SK-N-SH (cell line): ENCODE measurements at regions of chr17 and their contacts with region 1.

Region 1: GRCh38 chr17:58417300-58418092 is at the start of gene RNF43:
- DNase-seq: peak; percentile 90
- H3K4me3 ChIP-seq: peak within 1 kb of the TSS; percentile 33 to 50
- H3K27ac ChIP-seq: no peak within 1 kb of the TSS
- H3K4me1 ChIP-seq: peaks cover 0 to 6% of the 10 kb centered on the region in 2 experiments; a peak in 2 of 4 replicates
- H3K27me3 ChIP-seq: peaks cover 20% of the 10 kb centered on the region
- CTCF ChIP-seq: peak; percentile 79
- EP300 ChIP-seq: no peak
- RAD21 ChIP-seq: peak; percentile 87
- polyA plus RNA-seq, gene RNF43: not detected in 2 replicates

Region 2: GRCh38 chr17:58249270-58250133 is 168.0 kb before region 1 on chr17:
- CTCF ChIA-PET with region 1: interaction called, 51 read pairs
- POLR2A ChIA-PET with region 1: no interaction called
- DNase-seq: peak; percentile 99
- H3K4me3 ChIP-seq: peak overlapping the region; percentile 47 to 71
- H3K27ac ChIP-seq: no peak overlapping the region
- H3K4me1 ChIP-seq: peaks cover 0 to 8% of the 10 kb centered on the region in 2 experiments; a peak in 1 of 4 replicates
- H3K27me3 ChIP-seq: peaks cover 79% of the 10 kb centered on the region
- CTCF ChIP-seq: peak; percentile 99
- EP300 ChIP-seq: no peak
- RAD21 ChIP-seq: peak; percentile 66

Region 3: DNA sequence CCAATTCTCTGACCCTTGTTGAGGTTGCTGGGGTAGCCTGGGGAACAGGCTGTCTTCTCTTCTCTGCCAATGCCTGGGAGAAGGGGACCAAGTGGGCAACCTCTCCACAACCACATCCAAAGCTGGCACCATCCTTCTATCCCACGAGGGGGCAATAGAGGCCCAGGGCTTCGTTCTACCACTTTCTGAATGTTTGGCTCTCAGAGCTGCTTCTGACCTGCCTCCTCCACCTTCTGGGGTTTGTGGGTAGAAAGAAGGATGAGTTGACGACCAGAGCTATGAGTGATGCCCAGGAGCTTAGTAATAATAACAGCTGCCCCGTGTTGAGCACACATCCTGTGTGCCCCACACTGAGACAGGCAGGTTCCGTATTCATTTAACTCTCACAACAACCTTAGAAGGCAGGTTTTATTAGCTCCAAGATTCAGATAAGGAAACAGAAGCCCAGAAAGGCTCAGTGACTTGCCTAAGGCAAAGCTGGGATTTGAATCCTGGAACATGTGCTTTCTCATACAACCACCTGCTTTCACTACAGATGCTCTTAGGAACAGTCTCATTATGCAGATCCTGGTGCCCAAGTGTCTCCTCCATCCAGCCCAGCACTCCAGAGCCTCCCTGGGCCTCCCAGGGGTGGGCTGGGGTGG is 100.0 kb before region 1 on chr17:
- CTCF ChIA-PET with region 1: interaction called, 31 read pairs
- POLR2A ChIA-PET with region 1: no interaction called
- DNase-seq: peak; percentile 81
- H3K4me3 ChIP-seq: no peak overlapping the region
- H3K27ac ChIP-seq: no peak overlapping the region
- H3K4me1 ChIP-seq: no peaks in the 10 kb centered on the region
- H3K27me3 ChIP-seq: no peaks in the 10 kb centered on the region
- CTCF ChIP-seq: peak; percentile 74
- EP300 ChIP-seq: no peak
- RAD21 ChIP-seq: peak; percentile 83

Region 4: DNA sequence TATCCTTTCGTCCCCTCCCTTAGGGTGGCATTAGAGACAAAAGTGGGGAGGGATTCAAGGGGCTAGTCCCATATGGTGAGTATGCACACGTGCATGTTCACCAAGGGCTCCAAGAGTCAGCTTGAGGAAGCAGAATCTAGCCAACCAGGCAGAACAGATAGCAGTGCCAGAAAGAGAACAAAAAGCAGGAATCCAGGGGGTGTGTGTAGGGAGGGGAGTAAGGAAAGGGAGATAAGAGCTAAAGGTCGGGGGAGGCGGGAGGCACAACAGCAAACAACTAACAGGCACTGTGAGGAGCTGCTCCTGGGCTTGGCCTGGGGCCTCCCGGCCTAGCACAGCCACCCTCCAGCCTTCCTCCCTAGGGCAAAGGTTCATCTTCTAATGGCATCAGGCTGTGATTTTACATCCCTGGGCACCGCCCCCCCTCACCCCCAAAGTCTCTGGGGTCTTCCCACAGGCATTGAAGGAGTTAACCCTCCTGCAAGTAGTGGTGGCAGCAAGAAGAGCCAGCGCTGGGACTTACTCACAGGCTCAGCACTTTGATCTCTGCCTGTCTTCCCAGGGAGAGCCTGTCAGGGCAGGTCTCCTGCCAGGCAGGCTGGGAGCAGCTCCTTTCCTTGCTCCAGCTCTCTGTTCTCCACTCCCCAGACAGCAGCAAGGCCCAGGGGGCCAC is 53.1 kb before region 1 on chr17:
- CTCF ChIA-PET with region 1: interaction called, 21 read pairs
- POLR2A ChIA-PET with region 1: no interaction called
- DNase-seq: no peak
- H3K4me3 ChIP-seq: no peak overlapping the region
- H3K27ac ChIP-seq: no peak overlapping the region
- H3K4me1 ChIP-seq: peaks cover 0 to 2% of the 10 kb centered on the region in 2 experiments; a peak in 1 of 4 replicates
- H3K27me3 ChIP-seq: peaks cover 32% of the 10 kb centered on the region; the same call in 1 of the 2 replicates
- CTCF ChIP-seq: no peak
- EP300 ChIP-seq: no peak
- RAD21 ChIP-seq: no peak

Region 5: GRCh38 chr17:58402047-58402446 is 15.4 kb before region 1 on chr17:
- CTCF ChIA-PET with region 1: interaction called, 12 read pairs
- POLR2A ChIA-PET with region 1: no interaction called
- DNase-seq: no peak
- H3K4me3 ChIP-seq: no peak overlapping the region
- H3K27ac ChIP-seq: no peak overlapping the region
- H3K4me1 ChIP-seq: no peaks in the 10 kb centered on the region
- H3K27me3 ChIP-seq: peaks cover 28% of the 10 kb centered on the region
- CTCF ChIP-seq: no peak
- EP300 ChIP-seq: no peak
- RAD21 ChIP-seq: no peak

Region 6: GRCh38 chr17:58447039-58447975 is 29.8 kb after region 1 on chr17:
- CTCF ChIA-PET with region 1: interaction called, 12 read pairs
- POLR2A ChIA-PET with region 1: no interaction called
- DNase-seq: peak; percentile 78
- H3K4me3 ChIP-seq: peak overlapping the region in 1 of 2 experiments; percentile 31; a peak in 1 of 4 replicates
- H3K27ac ChIP-seq: no peak overlapping the region
- H3K4me1 ChIP-seq: no peaks in the 10 kb centered on the region
- H3K27me3 ChIP-seq: no peaks in the 10 kb centered on the region; the same call in 1 of the 2 replicates
- CTCF ChIP-seq: peak; percentile 88
- EP300 ChIP-seq: no peak
- RAD21 ChIP-seq: peak; percentile 98

Region 7: DNA sequence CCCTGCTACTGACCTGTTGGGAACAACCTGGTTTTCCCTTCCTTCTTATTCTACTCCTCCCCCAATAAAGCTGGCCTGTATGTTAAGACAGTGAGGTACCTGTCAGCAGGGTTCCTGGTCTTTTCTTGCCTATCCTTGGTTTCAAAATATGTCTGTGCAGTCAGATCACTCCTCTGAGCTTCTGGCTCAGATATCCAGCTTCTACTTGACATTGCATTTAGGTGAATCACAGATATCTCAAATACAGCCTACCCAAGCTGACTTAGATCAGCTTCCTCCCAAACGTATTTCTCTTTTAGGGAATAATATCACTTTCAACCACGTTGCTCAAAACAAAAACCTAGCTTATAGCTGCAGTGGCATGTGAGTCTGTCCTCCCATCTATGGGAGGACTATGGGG is 225.6 kb after region 1 on chr17:
- CTCF ChIA-PET with region 1: no interaction called
- POLR2A ChIA-PET with region 1: no interaction called
- DNase-seq: no peak
- H3K4me3 ChIP-seq: peak overlapping the region in 1 of 2 experiments; percentile 2; a peak in 1 of 4 replicates
- H3K27ac ChIP-seq: no peak overlapping the region
- H3K4me1 ChIP-seq: no peaks in the 10 kb centered on the region
- H3K27me3 ChIP-seq: no peaks in the 10 kb centered on the region
- CTCF ChIP-seq: no peak
- EP300 ChIP-seq: no peak; a peak in 1 of 4 replicates
- RAD21 ChIP-seq: no peak